MCF 10A (cell line): ENCODE measurements at regions of chr6 and their contacts with region 1.

Region 1: GRCh38 chr6:3281631-3282475 is 23.1 kb downstream of the PSMG4 start:
- DNase-seq: peak; percentile 94
- H3K4me3 Mint-ChIP-seq: no peak overlapping the region
- H3K27ac Mint-ChIP-seq: no peak overlapping the region
- H3K4me1 Mint-ChIP-seq: peaks cover 11% of the 10 kb centered on the region
- H3K27me3 Mint-ChIP-seq: no peaks in the 10 kb centered on the region
- CTCF ChIP-seq: no peak

Region 2: GRCh38 chr6:3258720-3259490 is 22.9 kb before region 1 on chr6 and contains the start of gene PSMG4:
- CTCF ChIA-PET with region 1: interaction called, 10 read pairs
- POLR2A ChIA-PET with region 1: interaction called, 4 read pairs
- intact Hi-C with region 1: no loop called
- DNase-seq: peak; percentile 87
- H3K4me3 Mint-ChIP-seq: peak within 1 kb of the TSS; percentile 97
- H3K27ac Mint-ChIP-seq: peak within 1 kb of the TSS; percentile 65
- H3K4me1 Mint-ChIP-seq: peaks cover 8% of the 10 kb centered on the region
- H3K27me3 Mint-ChIP-seq: no peaks in the 10 kb centered on the region
- CTCF ChIP-seq: no peak
- total RNA-seq, gene PSMG4: 27.9 and 40.0 TPM in 2 replicates

Region 3: DNA sequence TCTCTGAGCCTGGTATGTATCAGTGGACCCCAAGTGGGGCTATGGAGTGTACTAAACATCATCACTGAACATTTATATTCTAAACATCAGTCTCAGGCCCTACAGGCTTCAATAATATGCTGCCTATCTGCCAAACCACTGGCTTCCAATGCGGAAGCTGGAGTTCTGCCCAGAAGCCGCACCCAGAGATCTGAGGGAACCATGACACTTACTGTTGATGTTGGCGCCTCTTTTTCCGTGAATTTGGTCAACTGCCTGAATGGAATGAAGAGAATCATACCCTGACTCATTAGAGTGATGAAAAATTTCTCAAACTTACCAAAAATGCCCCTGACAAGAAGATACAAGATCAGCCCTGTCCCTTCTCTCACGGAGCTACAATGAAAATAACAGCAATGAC is 108.8 kb after region 1 on chr6:
- CTCF ChIA-PET with region 1: no interaction called
- POLR2A ChIA-PET with region 1: interaction called, 11 read pairs
- intact Hi-C with region 1: loop called (anchors 5 kb)
- DNase-seq: peak; percentile 99
- H3K4me3 Mint-ChIP-seq: peak overlapping the region; percentile 49
- H3K27ac Mint-ChIP-seq: no peak overlapping the region
- H3K4me1 Mint-ChIP-seq: peaks cover 7% of the 10 kb centered on the region
- H3K27me3 Mint-ChIP-seq: no peaks in the 10 kb centered on the region
- CTCF ChIP-seq: no peak

Region 4: GRCh38 chr6:3592371-3592941 is 310.6 kb after region 1 on chr6:
- CTCF ChIA-PET with region 1: interaction called, 3 read pairs
- POLR2A ChIA-PET with region 1: interaction called, 6 read pairs
- intact Hi-C with region 1: loop called (anchors 1 kb)
- DNase-seq: peak; percentile 99
- H3K4me3 Mint-ChIP-seq: no peak overlapping the region
- H3K27ac Mint-ChIP-seq: peak overlapping the region; percentile 69
- H3K4me1 Mint-ChIP-seq: peaks cover 17% of the 10 kb centered on the region
- H3K27me3 Mint-ChIP-seq: no peaks in the 10 kb centered on the region
- CTCF ChIP-seq: no peak

Region 5: GRCh38 chr6:3732345-3733141 is 450.7 kb after region 1 on chr6:
- CTCF ChIA-PET with region 1: interaction called, 49 read pairs
- POLR2A ChIA-PET with region 1: interaction called, 11 read pairs
- intact Hi-C with region 1: loop called (anchors 1 kb)
- DNase-seq: peak; percentile 80
- H3K4me3 Mint-ChIP-seq: no peak overlapping the region
- H3K27ac Mint-ChIP-seq: no peak overlapping the region
- H3K4me1 Mint-ChIP-seq: peaks cover 9% of the 10 kb centered on the region
- H3K27me3 Mint-ChIP-seq: no peaks in the 10 kb centered on the region
- CTCF ChIP-seq: peak; percentile 94

Region 6: GRCh38 chr6:4008324-4009047 is 726.6 kb after region 1 on chr6:
- CTCF ChIA-PET with region 1: no interaction called
- POLR2A ChIA-PET with region 1: no interaction called
- intact Hi-C with region 1: loop called (anchors 2 kb)
- DNase-seq: peak; percentile 79
- H3K4me3 Mint-ChIP-seq: no peak overlapping the region
- H3K27ac Mint-ChIP-seq: no peak overlapping the region
- H3K4me1 Mint-ChIP-seq: peaks cover 17% of the 10 kb centered on the region
- H3K27me3 Mint-ChIP-seq: no peaks in the 10 kb centered on the region
- CTCF ChIP-seq: peak; percentile 55